ENCODE measurements at regions of chr6 and their contacts with region 1.

Region 1: GRCh38 chr6:8645212-8645611 is 209.9 kb upstream of the SLC35B3 start:
- DNase-seq: no peak

Region 2: DNA sequence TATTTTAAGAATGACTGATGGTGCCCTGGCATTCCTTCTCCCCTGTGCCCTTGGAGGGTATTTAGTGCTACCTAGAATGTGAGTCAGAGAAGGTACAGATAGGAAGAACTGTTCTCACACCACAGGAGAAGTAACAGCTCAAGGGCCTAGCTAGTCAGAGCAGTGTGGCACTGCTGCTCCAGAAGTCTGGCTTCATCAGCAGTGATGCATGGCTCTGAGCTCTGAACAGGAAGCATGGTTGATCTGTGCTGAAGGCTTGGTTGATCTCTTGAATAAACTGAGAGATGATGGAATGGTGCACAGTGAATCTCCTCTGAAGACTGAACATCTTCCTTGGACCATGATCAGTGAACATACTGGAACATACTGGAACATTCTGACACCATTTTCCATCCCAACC is 215.5 kb after region 1 on chr6:
- intact Hi-C with region 1: no loop called
- DNase-seq: no peak

Region 3: DNA sequence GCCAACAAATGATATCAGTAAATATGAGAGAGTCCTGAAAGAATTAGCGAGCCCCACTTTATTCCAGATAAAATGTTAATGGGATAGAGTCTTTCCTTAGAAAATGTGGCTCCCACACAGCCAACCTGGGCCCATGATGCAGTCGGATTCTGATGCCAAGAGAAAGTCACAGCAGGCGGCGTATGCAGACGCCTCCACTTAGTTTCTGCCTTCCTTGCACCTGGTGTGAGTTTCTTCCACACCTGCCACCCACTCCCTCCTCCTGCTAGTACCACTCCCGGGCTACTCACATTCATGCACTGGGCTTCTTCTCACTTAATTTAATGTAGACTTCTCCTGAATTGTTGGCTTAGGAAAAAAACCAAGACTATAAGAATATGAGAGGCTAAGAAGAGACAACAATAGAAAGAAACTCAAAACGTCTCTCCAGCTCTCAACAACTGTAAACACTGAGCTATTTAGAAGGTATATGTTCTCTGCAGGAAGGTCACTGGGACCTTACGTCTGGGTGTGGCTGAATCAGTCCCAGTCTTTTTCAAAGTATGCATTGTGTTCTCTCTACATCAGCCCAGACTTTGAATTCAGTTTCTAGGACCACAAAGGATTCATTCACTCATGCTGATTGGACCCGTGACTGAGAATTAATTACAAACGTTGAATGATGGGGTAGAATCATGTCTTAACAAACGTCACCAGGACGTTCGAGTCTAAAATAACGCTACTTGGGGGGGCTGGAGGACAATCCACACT is 1946.4 kb after region 1 on chr6:
- intact Hi-C with region 1: loop called in 1 of 2 experiments (anchors 5 kb)
- DNase-seq: no peak